ENCODE measurements at regions of chr19 and their contacts with region 1.

Region 1: DNA sequence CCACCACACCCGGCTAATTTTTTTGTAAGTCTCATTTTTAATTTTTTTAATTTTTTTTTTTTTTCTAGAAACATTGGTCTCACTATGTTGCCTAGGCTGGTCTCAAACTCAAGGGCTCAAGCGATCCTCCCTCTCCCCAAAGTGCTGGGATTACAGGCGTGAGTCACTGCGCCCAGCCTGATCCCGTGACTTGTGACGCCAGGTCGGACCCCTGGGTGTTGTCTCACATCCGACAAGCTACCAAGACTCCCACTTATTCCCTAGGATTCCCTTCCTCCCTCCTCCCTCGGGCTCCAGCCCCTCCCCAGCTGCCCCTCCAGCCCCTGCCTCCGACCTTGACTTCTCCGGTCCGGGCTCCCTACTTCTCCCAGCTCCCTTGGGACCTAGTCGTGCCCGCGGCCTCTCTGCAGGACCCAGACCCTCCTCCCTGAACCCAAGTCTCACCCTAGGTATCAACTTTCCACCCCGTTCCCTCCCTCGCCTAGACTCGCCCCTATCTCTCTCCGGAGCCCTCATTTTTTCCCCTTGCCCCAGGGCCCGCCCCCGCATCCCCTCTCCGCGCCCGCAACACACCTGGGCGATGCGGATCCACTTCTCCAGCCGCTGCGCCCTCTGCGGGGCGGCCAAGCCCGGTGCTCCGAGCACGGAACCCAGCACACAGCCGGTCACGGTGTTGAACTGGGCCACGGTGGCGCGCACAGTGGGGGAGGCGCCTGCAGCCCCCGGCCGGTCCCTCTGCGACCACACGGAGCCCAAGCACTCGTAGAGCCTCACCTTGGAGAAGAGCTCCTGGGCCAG is 13.1 kb downstream of the RGL3 start:
- DNase-seq: peak in 1 of 2 experiments; percentile 87
- H3K4me3 ChIP-seq: peak overlapping the region in 1 of 4 experiments; percentile 47; a peak in 2 of 8 replicates
- H3K27ac ChIP-seq: 0 out of 2 replicates have a peak overlapping the region, but pooled peaks have one; percentile 49
- H3K4me1 ChIP-seq: peaks cover 0 to 6% (median under 1%) of the 10 kb centered on the region in 4 experiments; a peak in 4 of 7 replicates
- H3K27me3 ChIP-seq: no peaks in the 10 kb centered on the region
- CTCF ChIP-seq: peak; percentile 57 to 69 (median 63)
- EP300 ChIP-seq: no peak
- POLR2A ChIP-seq: no peak
- RAD21 ChIP-seq: peak; percentile 48 to 69; a peak in 3 of 4 replicates

Region 2: GRCh38 chr19:11293433-11294389 is 112.3 kb before region 1 on chr19:
- CTCF ChIA-PET with region 1: interaction called, 12 read pairs
- POLR2A ChIA-PET with region 1: no interaction called
- DNase-seq: peak; percentile 88 to 100
- H3K4me3 ChIP-seq: peak overlapping the region in 2 of 4 experiments; percentile 21 to 44; a peak in 4 of 8 replicates
- H3K27ac ChIP-seq: no peak overlapping the region
- H3K4me1 ChIP-seq: peaks cover 2 to 6% (median 2%) of the 10 kb centered on the region in 4 experiments; a peak in 5 of 7 replicates
- H3K27me3 ChIP-seq: no peaks in the 10 kb centered on the region; a peak in 2 of 7 replicates
- CTCF ChIP-seq: peak; percentile 92 to 97 (median 93)
- EP300 ChIP-seq: no peak
- POLR2A ChIP-seq: no peak
- RAD21 ChIP-seq: peak; percentile 92 to 94

Region 3: DNA sequence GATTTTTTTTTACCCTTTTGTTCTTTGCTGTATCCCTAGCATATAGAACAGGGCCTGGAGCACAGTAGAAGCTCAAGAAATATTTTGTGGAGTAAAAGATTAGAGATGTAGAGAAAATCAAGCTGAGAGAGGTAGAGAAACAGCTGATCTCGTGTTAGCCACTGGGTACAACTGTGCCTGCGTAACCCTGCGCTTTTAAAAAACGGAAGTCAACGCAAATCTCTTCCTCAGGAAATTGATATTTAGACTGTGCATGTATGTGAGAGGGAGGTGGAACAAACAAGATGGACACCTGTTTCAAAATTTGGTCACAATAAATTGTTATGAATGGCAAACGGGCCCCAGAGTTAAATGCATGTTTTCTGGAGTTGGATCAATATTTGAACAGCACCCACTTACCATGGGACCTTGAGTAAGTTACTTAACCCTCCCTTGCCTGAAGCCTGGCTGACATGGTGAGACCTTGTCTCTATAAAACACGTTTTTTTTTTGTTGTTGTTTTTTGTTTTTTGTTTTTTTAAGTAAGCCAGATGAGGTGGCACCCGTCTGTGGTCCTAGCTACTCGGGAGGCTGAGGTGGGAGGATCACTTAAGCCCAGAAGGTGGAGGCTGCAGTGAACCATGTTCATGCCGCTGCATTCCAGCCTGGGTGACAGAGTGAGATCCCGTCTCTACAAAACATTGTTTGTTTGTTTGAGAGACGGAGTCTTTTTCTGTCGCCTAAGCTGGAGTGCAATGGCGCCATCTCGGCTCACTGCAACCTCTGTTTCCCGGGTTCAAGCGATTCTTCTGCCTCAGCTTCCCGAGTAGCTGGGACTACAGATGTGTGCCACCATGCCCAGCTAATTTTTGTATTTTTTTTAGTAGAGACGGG is 18.6 kb before region 1 on chr19:
- CTCF ChIA-PET with region 1: interaction called, 69 read pairs
- POLR2A ChIA-PET with region 1: interaction called, 11 read pairs
- DNase-seq: no peak
- H3K4me3 ChIP-seq: no peak overlapping the region
- H3K27ac ChIP-seq: no peak overlapping the region
- H3K4me1 ChIP-seq: peaks cover 0 to 3% (median 0%) of the 10 kb centered on the region in 4 experiments; a peak in 2 of 7 replicates
- H3K27me3 ChIP-seq: no peaks in the 10 kb centered on the region
- CTCF ChIP-seq: no peak
- EP300 ChIP-seq: no peak
- POLR2A ChIP-seq: no peak
- RAD21 ChIP-seq: no peak

Region 4: DNA sequence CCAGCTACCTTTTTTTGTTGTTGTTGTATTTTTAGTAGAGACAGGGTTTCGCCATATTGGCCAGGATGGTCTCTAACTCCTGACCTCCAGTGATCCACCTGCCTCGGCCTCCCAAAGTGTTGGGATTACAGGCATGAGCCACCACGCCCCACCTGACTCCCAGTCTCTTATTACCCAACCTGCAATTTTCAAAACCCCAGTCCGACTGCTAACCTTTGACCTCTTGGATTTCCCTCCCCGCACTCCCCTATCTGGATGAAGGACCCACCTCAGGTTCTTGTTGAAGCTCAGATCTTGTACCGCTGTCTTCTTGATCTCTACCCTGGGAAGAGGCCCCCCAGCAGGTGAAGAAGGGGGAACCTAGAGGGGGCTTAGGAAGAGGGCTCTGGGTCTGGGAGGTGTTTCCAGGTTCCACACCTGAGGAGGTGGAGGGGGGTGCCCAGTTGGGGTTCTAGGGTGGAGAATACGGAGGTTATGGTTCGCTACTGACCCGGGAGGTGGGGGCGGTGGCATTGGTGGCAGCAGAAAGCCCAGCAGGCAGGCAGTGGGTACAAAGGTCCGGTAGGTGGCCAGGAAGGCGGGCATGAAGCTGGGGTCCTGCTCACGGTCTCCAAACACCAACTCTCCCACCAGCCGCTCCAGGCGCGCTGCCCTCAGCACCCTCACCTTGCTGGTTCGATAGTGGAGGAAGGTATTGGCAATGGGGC is 10.5 kb after region 1 on chr19:
- CTCF ChIA-PET with region 1: interaction called, 24 read pairs
- POLR2A ChIA-PET with region 1: interaction called, 22 read pairs
- DNase-seq: no peak
- H3K4me3 ChIP-seq: no peak overlapping the region
- H3K27ac ChIP-seq: no peak overlapping the region
- H3K4me1 ChIP-seq: peaks cover 0 to 9% (median 3%) of the 10 kb centered on the region in 4 experiments; a peak in 3 of 7 replicates
- H3K27me3 ChIP-seq: peaks cover 0 to 12% (median 9%) of the 10 kb centered on the region in 4 experiments; a peak in 5 of 7 replicates
- CTCF ChIP-seq: no peak
- EP300 ChIP-seq: no peak
- POLR2A ChIP-seq: no peak
- RAD21 ChIP-seq: no peak

Region 5: GRCh38 chr19:11422163-11423021 is 16.3 kb after region 1 on chr19:
- CTCF ChIA-PET with region 1: interaction called, 24 read pairs
- POLR2A ChIA-PET with region 1: interaction called, 22 read pairs
- DNase-seq: peak; percentile 88 to 99
- H3K4me3 ChIP-seq: peak overlapping the region; percentile 37 to 76 (median 53)
- H3K27ac ChIP-seq: no peak overlapping the region
- H3K4me1 ChIP-seq: peaks cover 0 to 14% (median 12%) of the 10 kb centered on the region in 4 experiments; a peak in 5 of 7 replicates
- H3K27me3 ChIP-seq: peaks cover 2 to 28% (median 21%) of the 10 kb centered on the region in 4 experiments
- CTCF ChIP-seq: no peak
- EP300 ChIP-seq: no peak
- POLR2A ChIP-seq: peak in 1 of 2 experiments; percentile 60; a peak in 2 of 3 replicates
- RAD21 ChIP-seq: no peak

Region 6: DNA sequence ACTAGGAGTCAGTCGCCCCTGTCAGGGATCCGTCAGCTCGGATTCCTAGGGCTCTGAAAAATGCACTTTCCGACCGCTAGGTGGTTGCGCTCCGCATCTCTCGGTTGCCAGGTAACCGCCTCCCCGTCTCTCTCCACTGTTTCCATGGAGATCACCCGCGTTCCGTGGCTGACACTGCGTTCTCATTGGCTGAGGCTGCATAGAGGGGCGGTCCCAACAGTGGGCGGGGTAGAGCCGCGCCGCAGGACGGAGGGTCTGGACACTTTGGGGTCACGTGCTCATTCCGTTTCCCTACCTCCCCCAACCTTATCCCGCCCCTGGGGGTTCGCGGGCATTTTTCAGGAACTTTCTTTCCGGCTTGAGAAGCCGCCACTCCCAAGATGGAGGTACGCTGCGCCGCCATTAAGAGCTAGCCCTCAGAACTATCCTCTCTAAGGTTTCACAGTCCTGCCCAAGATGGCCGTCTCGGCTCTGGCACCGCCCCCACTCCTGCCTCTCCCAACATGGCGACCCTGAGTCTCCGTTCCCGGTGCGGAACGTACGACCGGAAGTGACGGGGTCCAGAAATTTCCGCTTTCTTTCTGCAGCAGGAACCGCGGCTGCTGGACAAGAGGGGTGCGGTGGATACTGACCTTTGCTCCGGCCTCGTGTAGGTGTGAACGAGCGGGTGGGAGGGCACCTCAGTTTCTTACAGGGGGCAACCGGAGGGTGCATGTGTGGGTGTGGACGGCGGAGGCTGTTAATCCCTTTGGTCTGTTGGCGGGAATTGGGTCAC is 29.2 kb after region 1 on chr19 and contains the starts of genes ODAD3 and PRKCSH:
- CTCF ChIA-PET with region 1: interaction called, 13 read pairs
- POLR2A ChIA-PET with region 1: interaction called, 3 read pairs
- DNase-seq: peak; percentile 98 to 99
- H3K4me3 ChIP-seq: peak within 1 kb of the TSS; percentile 86 to 99 (median 93)
- H3K27ac ChIP-seq: peak within 1 kb of the TSS; percentile 91
- H3K4me1 ChIP-seq: peaks cover 0 to 13% (median 7%) of the 10 kb centered on the region in 4 experiments; a peak in 5 of 7 replicates
- H3K27me3 ChIP-seq: no peaks in the 10 kb centered on the region
- CTCF ChIP-seq: peak; percentile 84 to 95 (median 86)
- EP300 ChIP-seq: peak in 1 of 2 experiments; percentile 51; a peak in 1 of 3 replicates
- POLR2A ChIP-seq: peak in 1 of 2 experiments; percentile 88; a peak in 2 of 3 replicates
- RAD21 ChIP-seq: peak; percentile 27 to 34; a peak in 2 of 4 replicates
- total RNA-seq, gene ODAD3: 1.6 and 2.2 TPM in 2 replicates
- total RNA-seq, gene PRKCSH: 337 and 341 TPM in 2 replicates

Region 7: GRCh38 chr19:11528551-11529341 is 122.7 kb after region 1 on chr19 and contains the start of gene ECSIT:
- CTCF ChIA-PET with region 1: no interaction called
- POLR2A ChIA-PET with region 1: no interaction called
- DNase-seq: peak; percentile 93 to 94
- H3K4me3 ChIP-seq: peak within 1 kb of the TSS; percentile 71 to 87 (median 82)
- H3K27ac ChIP-seq: peak within 1 kb of the TSS; percentile 86; the same call in 1 of the 2 replicates
- H3K4me1 ChIP-seq: no peaks in the 10 kb centered on the region; a peak in 2 of 7 replicates
- H3K27me3 ChIP-seq: no peaks in the 10 kb centered on the region
- CTCF ChIP-seq: no peak
- EP300 ChIP-seq: no peak
- POLR2A ChIP-seq: peak; percentile 66 to 91
- RAD21 ChIP-seq: no peak
- total RNA-seq, gene ECSIT: 53.5 and 55.7 TPM in 2 replicates

Measured in H1 (cell line).